PC-3 (cell line): ENCODE measurements at regions of chr10 and their contacts with region 1.

Region 1: GRCh38 chr10:79068562-79069324 is at the start of gene ZMIZ1:
- DNase-seq: peak; percentile 100
- ATAC-seq: peak; percentile 47
- H3K4me3 ChIP-seq: peak within 1 kb of the TSS; percentile 66
- H3K27ac ChIP-seq: peak within 1 kb of the TSS; percentile 3
- H3K4me1 ChIP-seq: peaks cover 34% of the 10 kb centered on the region
- H3K27me3 ChIP-seq: no peaks in the 10 kb centered on the region
- CTCF ChIP-seq: peak; percentile 57
- total RNA-seq, gene ZMIZ1: 55.4 and 84.2 TPM in 2 replicates

Region 2: DNA sequence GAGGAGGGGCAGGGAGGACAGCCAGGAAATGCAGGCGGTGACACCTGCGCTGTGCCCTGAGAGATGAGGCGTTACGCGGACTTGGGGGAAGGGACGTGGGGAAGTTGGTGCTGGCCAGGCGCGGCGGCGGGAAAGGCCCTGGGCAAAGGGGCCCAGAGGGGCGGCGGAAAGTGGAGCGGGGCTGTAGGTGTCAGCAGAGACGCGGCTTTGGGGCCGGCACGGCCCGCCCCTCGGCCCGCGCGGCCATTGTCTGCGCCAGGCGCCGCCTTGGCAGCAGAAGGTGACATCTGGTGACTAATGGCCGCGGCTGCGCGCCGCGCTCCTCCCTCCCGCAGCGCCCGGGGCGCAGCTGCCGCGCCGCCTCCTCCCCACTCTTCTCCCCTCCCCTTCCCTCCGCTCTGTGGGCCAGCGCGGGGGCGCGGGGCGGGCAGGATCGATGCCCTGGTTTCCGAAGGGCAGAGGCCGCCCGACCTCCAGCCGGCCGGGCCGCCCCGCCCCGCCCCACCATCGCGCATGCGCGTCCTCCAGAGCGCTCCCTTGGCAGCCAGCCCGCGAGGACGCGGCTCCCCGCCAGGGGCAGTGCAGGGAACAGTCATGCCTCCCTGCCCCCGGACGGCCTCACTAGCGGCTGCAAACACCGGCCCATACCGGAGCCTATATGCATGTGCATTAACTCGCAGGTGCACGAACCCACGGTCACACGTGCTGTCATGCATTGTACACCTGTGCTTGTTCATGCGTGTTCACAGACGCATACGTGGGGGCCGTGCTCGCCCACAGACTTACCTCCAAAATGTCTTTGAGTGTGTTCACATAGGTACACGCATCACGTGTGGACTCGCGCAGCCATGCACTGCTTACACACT is 765.5 kb before region 1 on chr10:
- CTCF ChIA-PET with region 1: no interaction called
- POLR2A ChIA-PET with region 1: no interaction called
- intact Hi-C with region 1: loop called (anchors 1 kb)
- DNase-seq: peak; percentile 100
- ATAC-seq: peak; percentile 91
- H3K4me3 ChIP-seq: peak overlapping the region; percentile 67
- H3K27ac ChIP-seq: peak overlapping the region; percentile 11
- H3K4me1 ChIP-seq: peaks cover 14% of the 10 kb centered on the region
- H3K27me3 ChIP-seq: peaks cover 36% of the 10 kb centered on the region
- CTCF ChIP-seq: peak; percentile 93

Region 3: DNA sequence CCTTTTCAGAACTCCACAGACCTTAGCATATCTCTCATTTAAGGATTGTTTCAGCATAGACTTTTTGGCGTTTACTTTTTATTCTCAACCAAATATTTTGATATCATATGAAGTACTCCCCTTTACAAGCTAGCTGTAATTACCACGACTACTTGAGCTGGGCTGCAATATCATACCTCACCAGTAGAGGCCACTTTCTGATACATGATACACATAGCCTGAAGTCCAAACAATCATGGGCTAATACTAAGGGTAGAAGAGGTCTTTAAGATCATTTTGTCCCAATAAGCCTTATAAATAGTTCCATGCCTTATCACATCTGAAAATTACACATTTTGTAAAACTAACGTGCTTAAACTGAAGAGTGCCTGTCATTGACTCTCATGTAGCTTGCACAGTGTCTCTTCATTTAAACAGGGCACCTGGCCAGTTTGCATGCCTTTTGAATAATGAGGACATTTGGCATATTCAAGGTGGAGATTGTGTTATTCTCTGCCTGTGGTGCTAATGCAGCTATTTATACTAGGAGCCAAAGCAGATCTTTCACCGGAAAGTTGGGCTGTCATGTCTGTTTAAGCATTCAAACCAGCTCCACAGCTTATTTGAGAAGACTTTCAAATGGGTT is 403.7 kb before region 1 on chr10:
- CTCF ChIA-PET with region 1: interaction called, 5 read pairs
- POLR2A ChIA-PET with region 1: interaction called, 5 read pairs
- intact Hi-C with region 1: loop called (anchors 1 kb)
- DNase-seq: peak; percentile 98
- ATAC-seq: peak; percentile 86
- H3K4me3 ChIP-seq: no peak overlapping the region
- H3K27ac ChIP-seq: no peak overlapping the region
- H3K4me1 ChIP-seq: no peaks in the 10 kb centered on the region
- H3K27me3 ChIP-seq: peaks cover 34% of the 10 kb centered on the region
- CTCF ChIP-seq: peak; percentile 100

Region 4: DNA sequence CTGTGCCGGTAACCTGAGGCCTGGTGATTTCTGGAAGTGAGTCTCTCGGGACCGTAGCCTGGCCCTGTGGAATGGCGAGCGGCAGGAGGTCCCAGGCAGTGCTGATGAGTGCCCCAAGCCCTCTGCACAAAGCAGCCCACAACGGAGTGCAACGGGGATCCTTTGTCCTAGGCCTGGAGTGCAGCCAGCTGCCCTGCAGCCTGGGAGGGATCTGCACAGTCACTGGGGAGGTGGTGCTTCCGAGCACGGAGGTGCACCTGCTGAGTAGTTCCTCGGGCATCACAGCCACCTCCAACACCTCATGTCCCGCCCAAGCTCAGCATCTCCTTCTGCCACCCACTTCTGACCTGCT is 162.8 kb before region 1 on chr10:
- CTCF ChIA-PET with region 1: no interaction called
- POLR2A ChIA-PET with region 1: no interaction called
- intact Hi-C with region 1: loop called (anchors 5 kb)
- DNase-seq: no peak
- ATAC-seq: no peak
- H3K4me3 ChIP-seq: no peak overlapping the region
- H3K27ac ChIP-seq: no peak overlapping the region
- H3K4me1 ChIP-seq: no peaks in the 10 kb centered on the region
- H3K27me3 ChIP-seq: no peaks in the 10 kb centered on the region
- CTCF ChIP-seq: no peak

Region 5: DNA sequence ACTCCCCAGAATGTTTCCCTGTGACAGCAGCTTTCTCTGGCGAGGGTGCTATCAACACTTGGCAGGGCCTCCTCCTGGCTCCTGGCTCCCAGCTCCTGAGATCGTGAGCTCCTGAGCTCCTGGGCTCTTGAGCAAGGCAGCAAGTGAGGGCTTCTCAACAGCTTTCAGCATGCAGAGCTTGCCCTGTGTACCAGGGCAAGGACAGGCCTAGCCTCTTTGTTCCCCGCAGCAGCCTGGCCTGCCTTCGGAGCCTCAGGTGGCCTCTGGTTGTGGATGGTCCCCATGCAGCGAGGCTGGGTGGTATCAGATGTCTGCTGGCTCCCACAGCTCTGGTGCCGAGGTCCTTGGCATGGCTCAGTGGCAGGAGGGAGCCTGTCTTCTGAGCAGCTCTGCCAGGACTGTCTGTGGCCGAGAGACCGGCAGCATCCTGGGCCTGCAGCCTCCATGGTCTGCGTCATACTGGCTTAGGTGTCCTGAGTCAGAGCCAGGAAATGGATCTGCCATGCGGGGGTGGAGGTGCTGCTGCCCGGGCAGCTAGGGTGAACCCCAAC is 44.2 kb after region 1 on chr10:
- CTCF ChIA-PET with region 1: no interaction called
- POLR2A ChIA-PET with region 1: no interaction called
- intact Hi-C with region 1: loop called (anchors 2 kb)
- DNase-seq: peak; percentile 97
- ATAC-seq: peak; percentile 93
- H3K4me3 ChIP-seq: no peak overlapping the region
- H3K27ac ChIP-seq: peak overlapping the region; percentile 59
- H3K4me1 ChIP-seq: peaks cover 30% of the 10 kb centered on the region
- H3K27me3 ChIP-seq: no peaks in the 10 kb centered on the region
- CTCF ChIP-seq: no peak

Region 6: DNA sequence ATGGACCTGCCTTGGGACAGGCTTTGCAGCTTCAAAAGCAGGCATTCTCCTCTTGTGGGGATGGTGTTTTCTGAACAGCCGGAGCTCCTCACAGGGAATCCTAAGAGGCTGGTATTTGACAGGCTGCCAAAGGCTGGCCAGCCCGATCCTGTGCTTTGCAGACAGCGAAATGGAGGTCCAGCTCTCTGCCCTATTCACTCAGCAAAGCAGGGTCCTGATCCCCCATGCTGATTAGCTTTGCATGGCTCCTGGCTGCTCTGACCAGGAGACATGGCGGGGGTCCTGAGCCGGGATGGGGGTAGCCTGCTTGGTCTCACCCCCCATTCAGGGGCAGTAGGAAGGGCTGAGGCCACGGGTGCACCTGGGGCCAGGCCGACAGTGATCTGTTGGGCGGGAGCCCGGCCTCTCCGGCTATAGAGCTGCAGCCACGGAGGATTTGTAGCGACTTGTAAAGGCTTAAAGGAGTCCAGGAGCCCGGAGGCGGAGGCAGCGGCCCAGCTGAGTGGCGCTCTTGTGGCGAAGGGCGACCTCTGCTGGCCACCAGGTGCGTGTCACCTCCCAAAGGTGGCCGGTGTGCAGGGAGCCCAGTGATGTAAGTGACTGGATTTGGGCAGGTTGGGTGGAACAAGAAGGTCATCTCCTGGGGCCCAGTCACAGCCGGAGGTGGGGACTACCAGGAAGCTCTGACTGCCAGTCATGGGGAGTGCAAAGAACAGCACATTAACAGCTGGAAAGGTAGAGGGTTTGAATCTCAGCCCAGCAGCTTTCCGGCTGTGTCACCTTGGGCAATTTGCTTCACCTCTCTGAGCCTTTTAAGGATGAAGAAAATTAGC is 126.6 kb after region 1 on chr10:
- CTCF ChIA-PET with region 1: interaction called, 25 read pairs
- POLR2A ChIA-PET with region 1: interaction called, 5 read pairs
- intact Hi-C with region 1: loop called (anchors 1 kb)
- DNase-seq: peak; percentile 100
- ATAC-seq: peak; percentile 80
- H3K4me3 ChIP-seq: no peak overlapping the region
- H3K27ac ChIP-seq: no peak overlapping the region
- H3K4me1 ChIP-seq: peaks cover 28% of the 10 kb centered on the region
- H3K27me3 ChIP-seq: no peaks in the 10 kb centered on the region
- CTCF ChIP-seq: peak; percentile 100